ENCODE measurements at regions of chr17 and their contacts with region 1.

Region 1: GRCh38 chr17:45038728-45039634 is 12.5 kb downstream of the DCAKD start:
- DNase-seq: no peak
- ATAC-seq: no peak; the same call in 2 of the 3 replicates
- H3K4me3 ChIP-seq: no peak overlapping the region
- H3K27ac ChIP-seq: no peak overlapping the region
- H3K4me1 ChIP-seq: peaks cover 0 to 12% of the 10 kb centered on the region in 2 experiments; a peak in 3 of 5 replicates
- H3K27me3 ChIP-seq: no peaks in the 10 kb centered on the region
- CTCF ChIP-seq: no peak
- EP300 ChIP-seq: no peak
- POLR2A ChIP-seq: no peak
- RAD21 ChIP-seq: no peak

Region 2: GRCh38 chr17:45051060-45051719 is 12.2 kb after region 1 on chr17 and contains the start of gene DCAKD:
- CTCF ChIA-PET with region 1: no interaction called
- POLR2A ChIA-PET with region 1: interaction called, 13 read pairs
- in situ Hi-C with region 1: no loop called
- intact Hi-C with region 1: no loop called
- DNase-seq: peak; percentile 89 to 96 (median 90)
- ATAC-seq: peak; percentile 99
- H3K4me3 ChIP-seq: peak within 1 kb of the TSS; percentile 61
- H3K27ac ChIP-seq: peak within 1 kb of the TSS; percentile 87
- H3K4me1 ChIP-seq: peaks cover 17 to 20% of the 10 kb centered on the region in 2 experiments
- H3K27me3 ChIP-seq: no peaks in the 10 kb centered on the region
- CTCF ChIP-seq: no peak
- EP300 ChIP-seq: no peak
- POLR2A ChIP-seq: peak; percentile 79
- RAD21 ChIP-seq: no peak
- polyA plus RNA-seq, gene DCAKD: 7.9 to 9.6 TPM

Measured in K562 (cell line).